Aorta (tissue), 5 donors: ENCODE measurements at regions of chr4 and their contacts with region 1.

Region 1: GRCh38 chr4:74228691-74229640 is 71.0 kb downstream of the MTHFD2L start:
- DNase-seq: peak; percentile 68 to 81
- ATAC-seq: no peak
- H3K4me3 ChIP-seq: no peak overlapping the region
- H3K27ac ChIP-seq: no peak overlapping the region
- H3K4me1 ChIP-seq: no peaks in the 10 kb centered on the region
- H3K27me3 ChIP-seq: no peaks in the 10 kb centered on the region

Region 2: DNA sequence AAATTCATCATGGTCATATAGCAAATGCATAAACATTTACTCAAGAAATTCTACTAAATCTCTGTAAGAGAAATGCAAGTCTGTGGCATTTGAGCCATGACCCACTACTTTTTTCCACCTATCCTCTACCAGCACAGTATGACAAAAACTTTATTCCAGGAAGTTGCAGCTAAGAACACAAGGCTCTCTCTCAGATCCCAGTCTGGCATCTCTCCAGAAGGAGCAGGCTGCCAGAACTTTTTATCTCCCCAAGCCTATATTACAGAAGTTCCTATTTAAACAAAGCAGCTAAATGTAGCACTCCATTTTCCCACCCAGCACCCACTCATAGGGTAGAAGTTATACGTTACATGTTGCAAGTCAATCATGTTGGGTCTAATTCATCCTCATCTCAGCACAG is 30.0 kb after region 1 on chr4:
- intact Hi-C with region 1: no loop called
- DNase-seq: no peak
- ATAC-seq: no peak
- H3K4me3 ChIP-seq: no peak overlapping the region
- H3K27ac ChIP-seq: no peak overlapping the region
- H3K4me1 ChIP-seq: no peaks in the 10 kb centered on the region
- H3K27me3 ChIP-seq: no peaks in the 10 kb centered on the region

Region 3: GRCh38 chr4:74320559-74321118 is 91.7 kb after region 1 on chr4:
- intact Hi-C with region 1: no loop called
- DNase-seq: no peak
- ATAC-seq: no peak
- H3K4me3 ChIP-seq: no peak overlapping the region
- H3K27ac ChIP-seq: no peak overlapping the region
- H3K4me1 ChIP-seq: no peaks in the 10 kb centered on the region
- H3K27me3 ChIP-seq: no peaks in the 10 kb centered on the region

Region 4: GRCh38 chr4:74665377-74665776 is 436.4 kb after region 1 on chr4:
- intact Hi-C with region 1: loop called in 1 of 2 experiments (anchors 5 kb)
- DNase-seq: peak in 1 of 2 donors; percentile 46
- ATAC-seq: no peak
- H3K4me3 ChIP-seq: no peak overlapping the region
- H3K27ac ChIP-seq: no peak overlapping the region
- H3K4me1 ChIP-seq: no peaks in the 10 kb centered on the region
- H3K27me3 ChIP-seq: no peaks in the 10 kb centered on the region